Activated CD4-positive, alpha-beta memory T cell treated with anti-CD3 and anti-CD28 coated beads, Interleukin-2, amount 10 ng/mL, durations not matched to agents 7 days and 5 days (primary cell): ENCODE measurements at regions of chr17 and their contacts with region 1.

Region 1: DNA sequence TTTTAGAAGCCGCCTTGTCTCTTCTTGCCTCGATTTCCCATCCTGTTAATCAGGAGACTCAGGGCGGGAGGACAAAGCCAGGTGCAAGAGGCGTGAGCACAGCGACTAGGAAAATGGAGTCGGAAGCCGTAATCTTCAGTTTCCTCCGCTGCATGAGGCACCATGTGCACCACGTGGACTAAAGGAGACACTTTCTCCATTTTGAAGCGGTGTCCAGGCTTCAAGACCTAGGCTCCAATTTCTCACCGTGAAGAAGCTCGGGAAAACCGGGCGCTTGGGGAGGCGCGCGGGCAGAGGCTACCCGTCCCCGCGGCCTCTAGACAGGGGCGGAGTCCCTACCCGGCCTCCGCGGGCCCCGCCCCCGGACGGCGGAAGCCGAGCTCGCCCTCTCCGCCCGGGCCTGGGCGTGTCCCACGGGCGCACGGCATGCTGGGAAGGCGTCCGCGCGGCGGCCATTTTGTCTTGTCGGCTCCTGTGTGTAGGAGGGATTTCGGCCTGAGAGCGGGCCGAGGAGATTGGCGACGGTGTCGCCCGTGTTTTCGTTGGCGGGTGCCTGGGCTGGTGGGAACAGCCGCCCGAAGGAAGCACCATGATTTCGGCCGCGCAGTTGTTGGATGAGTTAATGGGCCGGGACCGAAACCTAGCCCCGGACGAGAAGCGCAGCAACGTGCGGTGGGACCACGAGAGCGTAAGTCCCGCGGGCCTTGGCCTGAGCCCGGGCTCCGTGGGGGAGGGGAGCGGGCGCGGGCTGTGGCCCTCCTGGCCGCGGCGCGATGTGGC is at the start of gene LUC7L3:
- DNase-seq: peak; percentile 95
- H3K4me3 Mint-ChIP-seq: peak within 1 kb of the TSS; percentile 95
- H3K27ac Mint-ChIP-seq: peak within 1 kb of the TSS; percentile 97
- H3K4me1 Mint-ChIP-seq: peaks cover 32% of the 10 kb centered on the region
- H3K27me3 Mint-ChIP-seq: no peaks in the 10 kb centered on the region
- total RNA-seq, gene LUC7L3: 133 to 139 TPM

Region 2: GRCh38 chr17:50686494-50687199 is 32.7 kb before region 1 on chr17:
- CTCF ChIA-PET with region 1: no interaction called
- POLR2A ChIA-PET with region 1: no interaction called
- DNase-seq: no peak
- H3K4me3 Mint-ChIP-seq: no peak overlapping the region
- H3K27ac Mint-ChIP-seq: no peak overlapping the region
- H3K4me1 Mint-ChIP-seq: peaks cover 3% of the 10 kb centered on the region
- H3K27me3 Mint-ChIP-seq: peaks cover 10% of the 10 kb centered on the region

Region 3: DNA sequence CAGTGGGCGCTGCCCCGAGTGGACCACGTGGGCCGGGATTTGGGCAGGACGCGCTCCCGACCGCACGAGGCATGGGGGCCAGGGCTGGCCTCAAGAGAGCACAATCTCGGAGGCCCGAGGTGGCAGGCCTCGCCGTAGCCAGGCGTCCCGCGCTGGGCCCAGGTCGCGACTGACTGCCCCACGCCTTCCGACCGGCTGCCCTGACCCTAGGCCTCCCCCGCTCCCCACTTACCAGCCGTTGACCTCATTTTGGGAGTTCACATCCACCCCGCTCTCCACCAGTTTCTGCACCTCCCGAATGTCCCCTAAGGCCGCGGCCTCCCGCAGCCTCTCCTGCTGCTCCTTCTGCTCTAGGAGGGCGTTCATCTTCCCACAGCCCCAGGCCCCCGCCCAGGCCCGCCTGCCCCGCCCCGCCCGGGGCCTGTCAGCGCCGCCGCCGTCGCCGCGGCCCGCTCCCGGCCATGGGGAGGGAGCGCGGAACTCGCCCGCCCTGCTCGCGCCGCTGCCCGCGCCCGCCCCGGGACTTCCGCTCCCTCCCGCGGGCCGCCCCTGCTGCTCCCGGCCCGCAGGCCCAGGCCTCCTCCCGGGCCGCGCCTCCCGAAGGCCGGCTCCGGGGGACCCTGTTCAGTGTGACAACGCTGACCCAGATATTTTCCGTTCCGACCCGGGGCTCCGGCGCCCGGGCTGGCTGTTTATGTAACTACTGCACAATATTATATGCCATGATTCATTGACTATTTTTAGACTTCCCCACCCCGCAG is 11.9 kb before region 1 on chr17 and contains the start of gene ANKRD40:
- CTCF ChIA-PET with region 1: interaction called, 5 read pairs
- POLR2A ChIA-PET with region 1: interaction called, 115 read pairs
- DNase-seq: peak; percentile 93
- H3K4me3 Mint-ChIP-seq: peak within 1 kb of the TSS; percentile 83
- H3K27ac Mint-ChIP-seq: peak within 1 kb of the TSS; percentile 96
- H3K4me1 Mint-ChIP-seq: peaks cover 47% of the 10 kb centered on the region
- H3K27me3 Mint-ChIP-seq: peaks cover 2% of the 10 kb centered on the region
- total RNA-seq, gene ANKRD40: 29.8 to 31.1 TPM

Region 4: GRCh38 chr17:50731575-50732460 is 12.5 kb after region 1 on chr17:
- CTCF ChIA-PET with region 1: no interaction called
- POLR2A ChIA-PET with region 1: interaction called, 10 read pairs
- DNase-seq: no peak
- H3K4me3 Mint-ChIP-seq: no peak overlapping the region
- H3K27ac Mint-ChIP-seq: peak overlapping the region; percentile 16
- H3K4me1 Mint-ChIP-seq: peaks cover 50% of the 10 kb centered on the region
- H3K27me3 Mint-ChIP-seq: no peaks in the 10 kb centered on the region

Region 5: DNA sequence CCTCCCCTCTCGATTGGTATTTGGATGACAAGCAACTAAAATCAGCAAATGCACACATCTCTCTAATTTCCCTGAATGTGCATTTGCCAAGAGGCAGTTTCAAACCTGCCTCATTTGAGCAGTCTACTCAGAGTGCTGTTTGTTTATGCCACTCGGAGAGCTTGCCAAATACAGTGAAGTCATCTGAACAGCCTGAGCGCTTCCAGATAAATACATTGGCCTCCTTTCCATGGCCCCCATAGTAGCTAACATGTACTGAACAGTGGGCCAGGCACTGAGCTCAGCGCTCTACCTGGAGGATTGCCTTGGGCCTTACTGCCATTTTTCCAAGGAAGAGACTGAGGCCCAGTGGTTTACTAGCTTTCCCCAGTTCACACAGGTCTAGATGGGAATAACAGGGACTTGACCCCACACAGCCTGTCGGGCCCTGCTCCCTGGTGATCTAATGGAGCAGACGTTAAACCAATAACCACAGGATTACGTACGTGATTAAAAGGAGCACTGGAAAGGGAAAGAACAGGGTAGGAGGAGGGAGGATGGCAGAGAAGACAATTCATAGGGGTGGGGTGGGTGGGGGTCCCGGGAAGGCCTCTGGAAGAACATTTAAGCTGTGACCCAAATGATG is 66.7 kb after region 1 on chr17:
- CTCF ChIA-PET with region 1: no interaction called
- POLR2A ChIA-PET with region 1: no interaction called
- DNase-seq: no peak
- H3K4me3 Mint-ChIP-seq: no peak overlapping the region
- H3K27ac Mint-ChIP-seq: no peak overlapping the region
- H3K4me1 Mint-ChIP-seq: peaks cover 15% of the 10 kb centered on the region
- H3K27me3 Mint-ChIP-seq: peaks cover 28% of the 10 kb centered on the region